H1 (cell line): ENCODE measurements at regions of chr10 and their contacts with region 1.

Region 1: GRCh38 chr10:115772606-115773005 is 500.4 kb downstream of the GFRA1 start:
- DNase-seq: no peak
- H3K4me3 ChIP-seq: no peak overlapping the region
- H3K27ac ChIP-seq: no peak overlapping the region
- H3K4me1 ChIP-seq: no peaks in the 10 kb centered on the region
- H3K27me3 ChIP-seq: no peaks in the 10 kb centered on the region
- CTCF ChIP-seq: no peak
- EP300 ChIP-seq: no peak
- POLR2A ChIP-seq: no peak
- RAD21 ChIP-seq: no peak

Region 2: GRCh38 chr10:115747811-115748210 is 24.8 kb before region 1 on chr10:
- CTCF ChIA-PET with region 1: no interaction called
- POLR2A ChIA-PET with region 1: no interaction called
- DNase-seq: no peak
- H3K4me3 ChIP-seq: no peak overlapping the region
- H3K27ac ChIP-seq: no peak overlapping the region
- H3K4me1 ChIP-seq: no peaks in the 10 kb centered on the region
- H3K27me3 ChIP-seq: no peaks in the 10 kb centered on the region
- CTCF ChIP-seq: no peak
- EP300 ChIP-seq: no peak
- POLR2A ChIP-seq: no peak
- RAD21 ChIP-seq: no peak

Region 3: DNA sequence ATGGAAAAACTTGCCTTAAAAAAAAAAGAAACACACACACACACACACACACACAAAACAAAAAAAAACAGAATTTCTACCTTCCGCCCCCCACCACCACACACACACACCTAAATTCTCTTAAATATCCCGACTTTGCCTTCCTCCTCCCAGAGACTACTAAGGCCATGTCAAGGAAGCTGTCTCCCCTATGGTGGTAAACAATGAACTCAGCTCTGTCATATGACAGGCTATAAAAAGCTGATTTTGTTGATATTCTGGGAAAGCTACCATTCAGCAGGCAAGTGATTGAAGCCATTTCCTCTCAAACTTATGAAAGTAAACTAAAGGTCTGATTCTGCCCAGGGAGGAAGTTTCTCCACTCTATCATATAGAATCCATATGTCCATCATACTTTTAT is 29.4 kb after region 1 on chr10:
- CTCF ChIA-PET with region 1: interaction called, 10 read pairs
- POLR2A ChIA-PET with region 1: no interaction called
- DNase-seq: no peak
- H3K4me3 ChIP-seq: 0 out of 8 replicates have a peak overlapping the region, but pooled peaks of 1 of the 4 experiments have one; percentile 17
- H3K27ac ChIP-seq: no peak overlapping the region
- H3K4me1 ChIP-seq: peaks cover 0 to 10% (median 4%) of the 10 kb centered on the region in 4 experiments; a peak in 2 of 7 replicates
- H3K27me3 ChIP-seq: no peaks in the 10 kb centered on the region
- CTCF ChIP-seq: no peak
- EP300 ChIP-seq: no peak
- POLR2A ChIP-seq: no peak
- RAD21 ChIP-seq: no peak

Region 4: DNA sequence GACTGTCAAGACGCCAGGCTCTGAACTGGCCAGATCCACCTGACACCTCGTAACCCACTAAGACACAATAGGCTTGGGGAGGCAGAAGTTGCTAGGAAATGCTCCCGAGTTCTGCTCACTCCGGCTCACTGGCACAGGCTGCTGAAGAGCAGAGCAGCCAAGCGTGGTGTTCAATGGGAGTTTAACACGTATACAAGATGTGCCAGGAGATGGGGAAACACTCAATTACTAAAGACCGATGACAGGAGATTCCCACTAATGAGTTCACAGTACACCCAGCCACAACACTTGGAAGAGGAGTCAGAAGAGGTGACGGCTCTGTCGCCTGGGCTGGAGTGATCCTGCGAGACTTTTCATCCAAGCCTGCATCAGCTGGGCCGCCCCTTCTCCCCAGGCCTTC is 197.0 kb after region 1 on chr10:
- CTCF ChIA-PET with region 1: no interaction called
- POLR2A ChIA-PET with region 1: no interaction called
- DNase-seq: no peak
- H3K4me3 ChIP-seq: no peak overlapping the region
- H3K27ac ChIP-seq: no peak overlapping the region
- H3K4me1 ChIP-seq: no peaks in the 10 kb centered on the region
- H3K27me3 ChIP-seq: no peaks in the 10 kb centered on the region
- CTCF ChIP-seq: no peak
- EP300 ChIP-seq: no peak
- POLR2A ChIP-seq: no peak
- RAD21 ChIP-seq: no peak